Cardiac septum (tissue), 1 donor: ENCODE measurements at regions of chr18 and their contacts with region 1.

Region 1: GRCh38 chr18:9827641-9828505 is 57.9 kb upstream of the TXNDC2 start:
- DNase-seq: no peak

Region 2: DNA sequence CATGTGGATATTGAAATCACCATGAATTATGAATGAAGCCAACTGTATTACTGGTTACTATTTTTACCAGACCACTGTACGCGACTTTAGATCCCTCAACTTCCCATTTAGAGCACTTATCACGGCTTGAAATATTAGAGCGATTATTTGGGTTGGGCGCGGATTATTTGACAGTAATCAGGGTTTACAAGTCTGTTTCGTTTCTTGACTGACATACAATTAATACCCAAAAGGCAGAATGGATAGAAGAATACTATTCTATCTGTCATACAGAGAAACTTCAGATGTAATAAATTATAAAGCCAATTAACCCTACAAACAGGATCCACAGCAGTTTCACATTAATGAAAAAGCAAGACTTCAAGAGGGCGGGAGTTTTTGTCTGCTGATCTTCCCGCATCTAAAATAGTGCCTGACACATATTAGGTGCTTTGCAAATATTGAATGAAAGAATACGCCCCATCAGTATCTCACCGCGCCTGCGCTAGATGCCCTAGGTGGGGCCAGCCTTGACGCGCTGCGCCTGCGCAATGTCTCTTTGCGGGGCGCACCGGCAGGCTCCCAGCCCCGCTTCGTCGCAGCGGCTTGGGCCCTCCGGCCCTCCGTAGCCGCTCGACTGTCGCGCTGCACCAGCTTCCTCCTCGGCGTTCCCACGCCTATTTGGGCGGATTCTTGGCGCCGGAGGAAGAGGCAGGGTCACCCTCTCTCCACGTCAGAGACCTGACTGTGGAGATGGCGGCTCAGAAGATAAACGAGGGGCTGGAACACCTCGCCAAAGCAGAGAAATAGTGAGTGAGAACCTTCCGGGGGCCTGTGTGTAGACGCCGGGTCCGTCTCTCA is 697.7 kb after region 1 on chr18 and contains the start of gene NAPG:
- intact Hi-C with region 1: loop called (anchors 10 kb)
- DNase-seq: peak; percentile 96
- total RNA-seq, gene NAPG: 44.8 TPM